Endothelial cell of umbilical vein (primary cell): ENCODE measurements at regions of chr2 and their contacts with region 1.

Region 1: DNA sequence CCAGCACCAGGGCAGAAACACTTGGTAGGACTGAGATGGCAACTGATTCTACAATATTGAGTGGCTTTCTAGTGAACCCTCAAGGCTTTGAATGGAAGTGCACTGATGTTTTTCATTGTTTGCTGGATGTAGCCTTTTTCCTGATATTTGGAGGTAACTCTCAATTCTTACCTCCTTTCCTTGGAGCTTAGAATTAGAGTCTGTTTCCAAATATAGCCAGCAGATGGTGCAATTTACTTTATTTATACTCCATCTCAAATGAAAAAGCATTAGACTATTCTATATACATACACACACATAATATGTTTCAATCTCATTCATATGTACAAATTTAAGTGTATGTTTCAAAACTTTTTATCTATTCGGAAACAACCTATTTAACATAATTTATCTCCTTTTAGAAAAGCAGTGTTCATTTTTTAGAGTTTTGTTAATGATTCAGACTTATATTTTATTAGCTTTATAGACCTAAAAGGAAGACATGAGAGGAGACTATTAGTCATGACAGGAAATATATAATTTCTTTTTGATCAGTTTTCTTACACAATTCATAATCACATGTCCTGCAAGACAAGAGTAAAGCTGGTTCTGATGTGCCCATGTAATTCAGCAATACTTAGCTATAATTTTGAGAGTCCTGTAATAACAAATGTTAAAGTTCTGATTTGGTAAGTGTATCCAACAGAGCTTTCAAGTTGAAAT is 124.8 kb downstream of the NUP35 start:
- DNase-seq: peak; percentile 71
- H3K4me3 ChIP-seq: no peak overlapping the region
- H3K27ac ChIP-seq: no peak overlapping the region
- H3K4me1 ChIP-seq: no peaks in the 10 kb centered on the region
- H3K27me3 ChIP-seq: no peaks in the 10 kb centered on the region
- CTCF ChIP-seq: peak in 1 of 2 donors; percentile 29
- POLR2A ChIP-seq: no peak

Region 2: DNA sequence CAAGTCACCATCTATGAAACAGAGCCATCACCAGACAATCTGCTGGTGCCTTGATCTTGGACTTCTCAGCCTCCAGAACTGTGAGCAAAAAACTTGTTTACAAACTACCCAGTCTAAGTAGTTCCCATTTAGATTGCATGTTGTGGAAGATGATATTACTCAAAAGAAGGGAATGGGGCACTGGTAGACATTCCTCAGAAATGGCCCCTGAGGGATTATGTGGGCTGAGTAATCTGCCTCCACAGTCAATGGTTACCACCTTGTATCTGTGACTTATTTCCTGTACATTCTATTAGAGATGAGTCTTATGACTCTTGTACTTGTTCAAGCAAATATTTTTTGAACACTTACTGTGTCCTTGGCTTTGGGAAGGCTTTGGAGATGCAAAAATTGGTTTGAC is 35.6 kb after region 1 on chr2:
- CTCF ChIA-PET with region 1: interaction called, 13 read pairs
- POLR2A ChIA-PET with region 1: no interaction called
- dilution Hi-C with region 1: no loop called
- intact Hi-C with region 1: no loop called
- DNase-seq: peak; percentile 14
- H3K4me3 ChIP-seq: no peak overlapping the region
- H3K27ac ChIP-seq: no peak overlapping the region
- H3K4me1 ChIP-seq: no peaks in the 10 kb centered on the region
- H3K27me3 ChIP-seq: no peaks in the 10 kb centered on the region
- CTCF ChIP-seq: no peak
- POLR2A ChIP-seq: no peak

Region 3: DNA sequence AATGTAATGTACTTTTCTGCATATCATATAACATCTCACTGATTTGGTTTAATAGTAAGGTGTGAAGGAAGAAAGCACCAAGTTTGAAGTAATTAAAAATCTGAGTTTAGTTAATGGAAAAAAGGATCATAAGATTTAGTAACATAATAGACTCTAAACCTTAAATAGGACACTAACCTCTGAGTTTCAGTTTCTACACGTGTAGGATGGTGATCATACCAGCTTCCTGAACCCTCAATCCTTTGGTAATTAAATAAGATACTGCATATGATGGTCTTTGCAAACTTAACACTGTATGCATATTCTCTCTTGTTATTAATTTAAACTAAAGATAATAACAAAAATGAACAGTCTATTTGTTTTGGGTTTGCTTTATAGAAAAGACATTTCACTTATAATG is 92.0 kb after region 1 on chr2:
- CTCF ChIA-PET with region 1: interaction called, 18 read pairs
- POLR2A ChIA-PET with region 1: no interaction called
- dilution Hi-C with region 1: no loop called
- intact Hi-C with region 1: no loop called
- DNase-seq: no peak
- H3K4me3 ChIP-seq: no peak overlapping the region
- H3K27ac ChIP-seq: no peak overlapping the region
- H3K4me1 ChIP-seq: no peaks in the 10 kb centered on the region
- H3K27me3 ChIP-seq: no peaks in the 10 kb centered on the region
- CTCF ChIP-seq: no peak
- POLR2A ChIP-seq: no peak

Region 4: DNA sequence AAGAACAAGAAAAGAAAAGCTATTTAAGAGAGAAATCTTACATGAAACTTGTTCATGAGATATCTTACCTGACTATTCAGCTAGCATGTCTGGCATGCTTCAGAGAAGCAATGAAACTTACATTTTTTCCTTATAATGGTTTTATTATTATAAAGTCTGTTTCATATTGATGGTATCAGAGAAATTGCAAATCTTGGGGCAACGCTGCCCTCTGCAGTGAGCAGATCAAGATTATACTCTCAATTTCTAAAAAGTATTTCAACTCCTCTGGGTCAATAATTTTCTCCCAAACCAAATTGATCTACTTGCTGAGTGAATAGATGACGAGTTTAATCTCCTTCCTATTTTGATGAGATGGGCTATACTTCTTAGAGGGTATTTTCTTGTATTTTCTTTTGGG is 110.8 kb after region 1 on chr2:
- CTCF ChIA-PET with region 1: interaction called, 340 read pairs
- POLR2A ChIA-PET with region 1: interaction called, 3 read pairs
- dilution Hi-C with region 1: no loop called
- intact Hi-C with region 1: loop called (anchors 1 kb)
- DNase-seq: peak; percentile 48
- H3K4me3 ChIP-seq: no peak overlapping the region
- H3K27ac ChIP-seq: no peak overlapping the region
- H3K4me1 ChIP-seq: no peaks in the 10 kb centered on the region
- H3K27me3 ChIP-seq: no peaks in the 10 kb centered on the region
- CTCF ChIP-seq: peak in 1 of 2 donors; percentile 11
- POLR2A ChIP-seq: no peak

Region 5: DNA sequence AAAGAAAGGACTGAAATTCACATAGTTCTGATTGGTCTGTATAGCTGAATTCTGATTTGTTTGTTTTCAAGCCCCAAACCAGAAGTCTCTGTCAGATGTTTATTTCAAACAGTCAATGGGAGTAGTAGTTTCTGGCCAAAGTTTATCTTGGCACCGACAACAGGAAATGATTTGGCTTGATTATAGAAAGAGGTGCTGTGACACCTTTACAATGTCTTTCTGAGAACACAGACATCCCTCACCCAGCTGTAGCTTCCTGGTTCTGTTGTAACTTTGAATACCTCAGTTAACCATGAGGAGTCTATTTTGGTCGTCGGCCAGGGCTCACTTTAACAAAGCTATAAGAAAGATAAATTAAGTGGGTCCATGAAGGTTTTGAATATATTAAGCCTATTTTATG is 804.3 kb after region 1 on chr2:
- CTCF ChIA-PET with region 1: interaction called, 6 read pairs
- POLR2A ChIA-PET with region 1: no interaction called
- dilution Hi-C with region 1: no loop called
- intact Hi-C with region 1: loop called (anchors 5 kb)
- DNase-seq: peak; percentile 30
- H3K4me3 ChIP-seq: no peak overlapping the region
- H3K27ac ChIP-seq: no peak overlapping the region
- H3K4me1 ChIP-seq: no peaks in the 10 kb centered on the region
- H3K27me3 ChIP-seq: no peaks in the 10 kb centered on the region
- CTCF ChIP-seq: no peak
- POLR2A ChIP-seq: no peak

Region 6: GRCh38 chr2:184611361-184612085 is 1362.5 kb after region 1 on chr2:
- CTCF ChIA-PET with region 1: interaction called, 10 read pairs
- POLR2A ChIA-PET with region 1: no interaction called
- dilution Hi-C with region 1: no loop called
- intact Hi-C with region 1: no loop called
- DNase-seq: peak; percentile 41
- H3K4me3 ChIP-seq: no peak overlapping the region
- H3K27ac ChIP-seq: no peak overlapping the region
- H3K4me1 ChIP-seq: no peaks in the 10 kb centered on the region
- H3K27me3 ChIP-seq: no peaks in the 10 kb centered on the region
- CTCF ChIP-seq: peak in 1 of 2 donors; percentile 9
- POLR2A ChIP-seq: no peak